Right ventricle myocardium superior (tissue), 1 donor: ENCODE measurements at regions of chr6 and their contacts with region 1.

Region 1: DNA sequence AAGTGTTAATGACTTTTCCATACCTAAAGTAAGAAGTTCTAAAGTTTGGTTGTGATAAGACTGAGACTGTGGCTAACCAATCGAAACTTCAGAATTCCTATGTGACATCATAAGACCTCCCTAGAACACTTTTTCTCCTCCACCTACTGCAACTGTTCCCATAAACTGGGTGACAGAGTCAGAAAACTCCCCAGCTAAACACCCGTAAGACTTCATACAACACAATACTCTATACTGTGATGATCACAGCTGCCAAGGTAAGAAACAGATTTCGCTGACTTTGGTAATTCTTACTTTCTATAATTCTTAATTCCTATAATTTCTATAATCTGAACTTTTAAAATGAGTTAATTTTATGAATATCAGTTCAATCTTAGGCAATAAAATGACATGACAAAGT is at the start of gene PLN:
- DNase-seq: no peak
- ATAC-seq: peak; percentile 83
- total RNA-seq, gene PLN: 2,342 TPM

Region 2: DNA sequence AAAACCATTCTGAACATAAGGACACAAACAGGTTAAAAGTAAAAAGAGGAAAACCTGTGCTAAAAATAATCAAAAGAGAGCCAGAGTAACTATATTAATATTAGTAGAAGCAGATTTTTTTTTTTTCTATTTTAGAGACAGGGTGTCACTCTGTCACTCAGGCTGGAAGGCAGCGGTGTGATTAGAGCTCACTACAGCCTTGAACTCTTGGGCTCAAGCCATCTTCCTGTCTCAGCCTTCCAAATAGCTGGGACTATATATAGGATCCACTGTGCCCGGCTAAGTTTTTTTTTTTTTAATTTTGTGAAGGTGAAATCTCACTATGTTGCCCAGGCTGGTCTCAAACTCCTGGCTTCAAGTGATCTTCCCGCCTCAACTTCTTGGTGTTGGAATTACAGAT is 33.4 kb before region 1 on chr6:
- intact Hi-C with region 1: loop called (anchors 5 kb)
- DNase-seq: peak; percentile 51
- ATAC-seq: peak; percentile 96

Region 3: GRCh38 chr6:118606268-118606667 is 58.1 kb after region 1 on chr6:
- intact Hi-C with region 1: no loop called
- DNase-seq: no peak
- ATAC-seq: no peak

Region 4: GRCh38 chr6:119129148-119129967 is 581.2 kb after region 1 on chr6:
- intact Hi-C with region 1: no loop called
- DNase-seq: no peak
- ATAC-seq: peak; percentile 83